ENCODE measurements at regions of chr11 and their contacts with region 1.

Region 1: DNA sequence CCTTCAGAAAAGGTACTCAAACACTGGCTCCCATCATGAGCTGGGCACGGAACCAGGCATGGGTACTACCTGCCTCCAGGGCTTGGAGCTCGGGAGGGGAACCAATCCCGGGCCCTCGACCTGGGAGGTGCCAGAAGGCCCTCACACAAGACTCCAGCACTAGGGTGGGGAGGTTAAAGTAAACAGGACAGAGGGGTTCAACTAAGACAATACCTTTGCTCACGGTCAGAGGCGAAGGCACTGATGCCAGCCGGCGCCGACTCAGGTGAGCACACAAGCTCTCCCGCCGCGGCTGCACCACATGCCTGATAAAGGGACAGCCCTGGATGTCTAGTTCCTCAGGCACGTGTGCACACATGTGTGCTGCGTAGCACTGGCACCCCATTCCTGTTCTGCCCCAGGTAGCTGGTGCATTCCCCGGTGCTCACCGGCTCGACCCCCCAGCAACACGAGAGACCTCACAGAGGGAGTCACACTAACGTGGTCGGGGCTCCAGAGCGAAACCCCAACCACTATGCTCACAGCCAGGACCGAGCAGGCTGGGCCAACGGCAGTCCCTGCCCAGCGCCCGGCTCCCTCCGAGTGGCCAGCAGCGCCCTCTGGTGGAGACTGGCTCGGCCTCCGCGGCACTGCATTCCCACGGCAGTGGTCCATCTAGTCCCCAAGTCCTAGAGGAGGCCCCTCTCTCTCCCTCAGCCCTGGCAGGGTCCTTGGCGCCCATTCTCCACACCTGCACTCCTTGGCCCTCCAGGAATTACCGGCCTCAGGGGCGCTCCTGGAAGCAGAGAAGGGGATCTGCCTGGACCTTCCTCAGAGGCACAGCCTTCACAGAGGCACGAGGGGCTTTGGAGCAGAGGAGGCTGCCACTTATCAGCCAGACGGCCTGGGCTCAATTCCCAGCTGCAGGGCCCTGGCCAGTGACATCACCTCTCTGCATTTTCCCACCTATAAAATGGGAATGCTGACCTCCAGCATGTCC is 28.8 kb upstream of the MOB2 start:
- DNase-seq: peak; percentile 84 to 91
- ATAC-seq: peak; percentile 91 to 96 (median 94)
- H3K4me3 ChIP-seq: no peak overlapping the region
- H3K27ac ChIP-seq: no peak overlapping the region
- H3K4me1 ChIP-seq: peaks cover 40% of the 10 kb centered on the region
- H3K27me3 ChIP-seq: no peaks in the 10 kb centered on the region
- CTCF ChIP-seq: peak; percentile 97

Region 2: GRCh38 chr11:1202776-1203504 is 312.4 kb before region 1 on chr11:
- intact Hi-C with region 1: loop called (anchors 1 to 5 kb)
- DNase-seq: peak; percentile 68 to 76
- ATAC-seq: peak; percentile 73 to 89 (median 84)
- H3K4me3 ChIP-seq: no peak overlapping the region
- H3K27ac ChIP-seq: no peak overlapping the region
- H3K4me1 ChIP-seq: no peaks in the 10 kb centered on the region
- H3K27me3 ChIP-seq: peaks cover 0 to 47% (median 8%) of the 10 kb centered on the region in 3 donors
- CTCF ChIP-seq: peak; percentile 85

Region 3: GRCh38 chr11:1458340-1459218 is 56.8 kb before region 1 on chr11:
- intact Hi-C with region 1: loop called (anchors 2 to 5 kb)
- DNase-seq: peak; percentile 48 to 70
- ATAC-seq: peak in 2 of 4 donors; percentile 30 to 44
- H3K4me3 ChIP-seq: no peak overlapping the region
- H3K27ac ChIP-seq: no peak overlapping the region
- H3K4me1 ChIP-seq: no peaks in the 10 kb centered on the region
- H3K27me3 ChIP-seq: no peaks in the 10 kb centered on the region
- CTCF ChIP-seq: no peak

Region 4: DNA sequence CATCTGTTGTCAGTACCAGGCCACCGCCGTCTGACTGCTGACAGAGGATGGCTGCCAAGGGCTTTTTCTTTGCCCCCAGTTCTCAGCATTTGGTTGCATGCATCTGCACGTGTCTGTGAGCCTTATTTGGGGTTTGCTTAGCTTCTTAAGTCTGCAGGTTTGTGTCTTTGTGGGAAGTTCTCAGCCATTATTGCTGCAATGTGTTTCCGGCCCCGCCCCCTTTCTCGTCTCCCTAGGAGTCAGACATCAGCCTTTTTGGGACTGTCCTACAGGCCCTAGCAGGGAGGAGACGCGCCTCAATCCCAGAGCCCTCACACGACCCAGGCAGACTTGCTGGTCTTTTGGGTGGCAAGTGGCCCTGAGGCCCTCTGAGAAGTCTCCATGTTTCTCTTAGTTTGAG is 36.8 kb before region 1 on chr11:
- intact Hi-C with region 1: no loop called
- DNase-seq: peak; percentile 12 to 51
- ATAC-seq: no peak
- H3K4me3 ChIP-seq: no peak overlapping the region
- H3K27ac ChIP-seq: no peak overlapping the region
- H3K4me1 ChIP-seq: peaks cover 26% of the 10 kb centered on the region
- H3K27me3 ChIP-seq: no peaks in the 10 kb centered on the region
- CTCF ChIP-seq: no peak

Region 5: GRCh38 chr11:1598816-1599215 is 83.4 kb after region 1 on chr11:
- intact Hi-C with region 1: no loop called
- DNase-seq: no peak
- ATAC-seq: no peak
- H3K4me3 ChIP-seq: no peak overlapping the region
- H3K27ac ChIP-seq: no peak overlapping the region
- H3K4me1 ChIP-seq: no peaks in the 10 kb centered on the region
- H3K27me3 ChIP-seq: peaks cover 0 to 19% (median 0%) of the 10 kb centered on the region in 3 donors
- CTCF ChIP-seq: no peak

Measured in psoas muscle (tissue), 8 donors.